ENCODE measurements at regions of chr11 and their contacts with region 1.

Region 1: DNA sequence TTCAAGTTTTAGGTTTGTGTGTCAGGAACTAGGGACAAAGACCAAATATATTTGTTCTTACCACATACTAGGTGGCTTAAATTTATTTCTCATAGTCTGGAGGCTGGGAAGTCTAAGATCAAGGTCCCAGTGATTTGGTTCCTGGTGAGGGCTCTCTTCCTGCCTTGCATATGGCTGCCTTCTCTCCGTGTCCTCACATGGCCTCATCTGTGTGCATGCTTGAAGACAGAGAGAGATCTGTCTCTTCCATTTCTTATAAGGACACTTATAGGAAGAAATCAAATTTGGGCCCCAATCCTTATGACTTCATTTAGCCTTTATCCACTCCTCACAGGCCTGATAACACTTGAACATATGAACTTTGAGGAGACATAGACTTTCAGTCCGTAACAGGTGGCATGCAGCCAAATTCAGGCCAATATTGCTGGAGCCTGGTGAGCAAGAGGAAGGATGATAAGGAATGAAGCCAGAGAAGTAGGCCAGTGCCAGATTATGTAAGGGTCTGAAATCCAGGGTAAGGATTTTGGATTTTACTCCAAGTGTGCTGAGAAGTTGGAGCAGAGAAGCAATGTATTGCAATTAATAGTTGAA is 35.1 kb downstream of the TTC17 start:
- DNase-seq: no peak
- H3K4me3 Mint-ChIP-seq: no peak overlapping the region
- H3K27ac Mint-ChIP-seq: no peak overlapping the region
- H3K4me1 Mint-ChIP-seq: peaks cover 24% of the 10 kb centered on the region
- H3K27me3 Mint-ChIP-seq: no peaks in the 10 kb centered on the region

Region 2: DNA sequence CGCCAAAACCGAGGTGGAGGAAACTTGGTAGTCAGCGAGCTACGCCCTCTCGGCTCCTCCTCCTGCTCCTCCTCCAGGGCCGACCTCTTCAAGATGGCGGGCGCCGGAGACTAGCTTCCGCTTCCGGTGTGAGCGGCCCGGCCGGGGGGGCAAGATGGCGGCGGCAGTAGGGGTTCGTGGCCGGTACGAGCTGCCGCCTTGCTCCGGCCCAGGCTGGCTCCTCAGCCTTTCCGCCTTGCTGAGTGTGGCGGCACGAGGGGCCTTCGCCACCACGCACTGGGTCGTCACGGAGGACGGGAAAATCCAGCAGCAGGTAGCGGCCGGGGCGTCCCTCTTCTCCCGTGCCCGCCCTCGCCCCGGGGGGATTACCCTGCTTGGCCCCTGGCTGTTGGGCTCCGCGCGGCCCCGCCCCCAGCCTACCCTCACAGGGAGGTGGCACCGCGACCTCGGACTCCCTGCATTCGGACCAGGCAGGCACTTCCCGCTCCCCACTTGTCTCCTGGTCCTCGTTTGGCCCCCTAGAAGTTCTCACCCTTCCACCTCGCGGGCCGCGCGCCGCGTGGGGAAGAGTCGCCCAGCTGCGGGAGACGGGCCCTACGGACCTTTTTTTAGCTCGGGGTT is 34.9 kb before region 1 on chr11 and contains the start of gene TTC17:
- intact Hi-C with region 1: loop called (anchors 2 kb)
- DNase-seq: peak; percentile 98
- H3K4me3 Mint-ChIP-seq: peak within 1 kb of the TSS; percentile 99
- H3K27ac Mint-ChIP-seq: peak within 1 kb of the TSS; percentile 97
- H3K4me1 Mint-ChIP-seq: peaks cover 29% of the 10 kb centered on the region
- H3K27me3 Mint-ChIP-seq: no peaks in the 10 kb centered on the region
- total RNA-seq, gene TTC17: 64.9 and 75.1 TPM in 2 replicates

Region 3: DNA sequence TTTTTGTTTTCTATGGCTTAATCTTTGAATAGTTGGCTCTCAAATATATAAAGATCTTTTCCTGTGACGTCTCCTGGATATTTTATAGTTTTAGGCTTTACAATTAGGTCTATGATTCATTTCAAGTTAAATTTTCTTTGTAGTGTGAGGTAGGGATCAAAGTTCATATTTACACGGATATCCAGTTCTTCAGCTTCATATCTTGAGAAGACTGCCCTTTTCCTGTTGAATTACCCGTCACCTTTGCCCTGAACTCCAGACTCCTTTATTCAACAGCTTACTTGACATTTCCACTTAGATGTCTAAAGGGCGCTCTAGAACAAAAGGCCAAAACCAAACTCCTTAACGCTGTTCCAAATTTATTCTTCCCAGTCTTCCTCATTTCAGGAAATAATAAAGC is 16.5 kb after region 1 on chr11:
- intact Hi-C with region 1: no loop called
- DNase-seq: no peak
- H3K4me3 Mint-ChIP-seq: no peak overlapping the region
- H3K27ac Mint-ChIP-seq: no peak overlapping the region
- H3K4me1 Mint-ChIP-seq: peaks cover 3% of the 10 kb centered on the region
- H3K27me3 Mint-ChIP-seq: no peaks in the 10 kb centered on the region

Region 4: DNA sequence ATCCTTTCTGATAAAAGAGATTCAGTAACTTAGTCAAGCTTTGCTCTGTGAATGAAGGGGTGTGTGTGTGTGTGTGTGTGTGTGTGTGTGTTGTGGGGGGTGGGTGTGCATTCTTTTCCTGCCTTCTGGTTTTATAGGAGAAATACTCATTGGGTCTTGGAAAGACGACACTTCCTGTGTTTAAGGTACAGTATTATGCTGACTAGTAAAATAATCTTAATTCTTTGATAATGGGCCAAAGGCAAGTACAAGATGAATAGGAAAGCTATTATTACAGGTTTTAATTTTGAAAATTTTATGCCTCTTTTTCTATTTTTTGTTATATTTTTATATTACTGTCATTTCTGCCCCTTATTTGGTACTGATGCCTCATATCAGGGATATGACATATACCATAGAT is 312.8 kb after region 1 on chr11:
- intact Hi-C with region 1: no loop called
- DNase-seq: no peak
- H3K4me3 Mint-ChIP-seq: no peak overlapping the region
- H3K27ac Mint-ChIP-seq: no peak overlapping the region
- H3K4me1 Mint-ChIP-seq: peaks cover 2% of the 10 kb centered on the region
- H3K27me3 Mint-ChIP-seq: no peaks in the 10 kb centered on the region

Region 5: DNA sequence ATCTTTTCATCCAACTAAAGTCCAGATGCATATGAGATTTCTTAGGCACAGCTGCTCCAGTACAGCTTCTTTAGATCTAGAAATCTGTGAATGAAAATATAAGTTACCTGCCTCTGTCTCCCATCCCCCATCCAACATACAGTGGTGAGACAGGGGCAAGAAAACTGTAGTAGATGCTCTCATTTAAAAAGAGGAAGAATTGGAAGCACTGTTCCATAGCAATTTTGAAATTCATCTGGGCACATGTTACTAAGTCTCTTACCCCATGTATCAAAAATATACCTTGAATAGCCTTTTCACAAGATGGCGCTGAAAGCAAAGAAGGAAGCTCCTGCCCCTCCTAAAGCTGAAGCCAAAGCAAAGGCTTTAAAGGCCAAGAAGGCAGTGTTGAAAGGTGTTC is 324.5 kb after region 1 on chr11:
- intact Hi-C with region 1: no loop called
- DNase-seq: no peak
- H3K4me3 Mint-ChIP-seq: no peak overlapping the region
- H3K27ac Mint-ChIP-seq: no peak overlapping the region
- H3K4me1 Mint-ChIP-seq: no peaks in the 10 kb centered on the region
- H3K27me3 Mint-ChIP-seq: no peaks in the 10 kb centered on the region